GM12878 (cell line): ENCODE measurements at regions of chr15 and their contacts with region 1.

Region 1: DNA sequence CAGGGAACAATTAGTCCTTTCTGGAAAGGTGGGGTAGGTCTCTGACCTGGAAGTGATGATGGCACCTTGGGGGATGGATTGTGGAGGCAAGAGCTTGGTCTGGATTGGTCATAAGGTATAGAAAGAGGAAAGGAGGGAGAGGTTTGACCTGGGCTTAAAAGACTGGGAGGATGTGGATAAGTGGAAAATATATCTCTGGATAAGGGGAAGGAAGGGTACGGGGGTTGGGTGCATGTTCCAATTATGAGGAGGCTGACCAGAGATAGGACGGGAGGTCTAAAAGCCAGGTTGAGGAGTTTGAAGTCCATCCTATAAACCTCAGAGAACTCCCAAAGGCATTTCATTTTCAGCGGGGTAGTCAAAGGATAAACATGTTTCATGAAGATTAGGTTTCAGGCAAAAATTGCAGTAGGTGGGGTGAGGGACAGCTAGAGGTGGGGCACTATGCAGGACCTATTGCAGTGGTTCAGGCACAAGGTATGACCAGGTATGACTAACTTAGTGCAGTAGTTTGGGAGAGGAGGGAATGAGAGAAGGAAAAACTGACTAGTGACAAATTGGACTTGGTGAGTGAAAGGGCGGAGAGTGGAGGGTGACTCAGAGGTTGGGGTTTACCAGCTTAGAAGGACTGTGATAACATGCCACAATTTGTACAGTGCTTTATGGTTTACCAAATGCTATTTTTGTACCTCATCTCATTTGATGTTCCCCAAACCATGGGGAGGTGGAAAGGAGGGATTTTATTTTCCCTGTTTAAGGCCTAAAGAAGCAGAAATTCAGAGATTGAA is 10.7 kb downstream of the PDE8A start:
- DNase-seq: no peak
- ATAC-seq: peak; percentile 51
- H3K4me3 ChIP-seq: no peak overlapping the region
- H3K27ac ChIP-seq: peak overlapping the region; percentile 24
- H3K4me1 ChIP-seq: peaks cover 38% of the 10 kb centered on the region
- H3K27me3 ChIP-seq: no peaks in the 10 kb centered on the region
- CTCF ChIP-seq: no peak
- EP300 ChIP-seq: no peak
- POLR2A ChIP-seq: no peak
- RAD21 ChIP-seq: no peak

Region 2: GRCh38 chr15:84981054-84981710 is 11.2 kb before region 1 on chr15:
- CTCF ChIA-PET with region 1: interaction called, 3 read pairs
- POLR2A ChIA-PET with region 1: interaction called, 8 read pairs
- RAD21 ChIA-PET with region 1: interaction called, 6 read pairs
- SMC1A ChIA-PET with region 1: interaction called, 13 read pairs
- in situ Hi-C with region 1: no loop called
- intact Hi-C with region 1: no loop called
- DNase-seq: peak; percentile 87
- ATAC-seq: peak; percentile 79
- H3K4me3 ChIP-seq: peak overlapping the region; percentile 94
- H3K27ac ChIP-seq: peak overlapping the region; percentile 92
- H3K4me1 ChIP-seq: peaks cover 9% of the 10 kb centered on the region
- H3K27me3 ChIP-seq: no peaks in the 10 kb centered on the region
- CTCF ChIP-seq: no peak
- EP300 ChIP-seq: peak; percentile 58 to 65; a peak in 1 of 4 replicates
- POLR2A ChIP-seq: peak; percentile 77
- RAD21 ChIP-seq: no peak

Region 3: GRCh38 chr15:85005319-85005718 is 13.0 kb after region 1 on chr15:
- CTCF ChIA-PET with region 1: interaction called, 21 read pairs
- POLR2A ChIA-PET with region 1: interaction called, 39 read pairs
- RAD21 ChIA-PET with region 1: interaction called, 18 read pairs
- SMC1A ChIA-PET with region 1: interaction called, 49 read pairs
- in situ Hi-C with region 1: no loop called
- intact Hi-C with region 1: no loop called
- DNase-seq: no peak
- ATAC-seq: no peak
- H3K4me3 ChIP-seq: no peak overlapping the region
- H3K27ac ChIP-seq: no peak overlapping the region
- H3K4me1 ChIP-seq: peaks cover 47% of the 10 kb centered on the region
- H3K27me3 ChIP-seq: no peaks in the 10 kb centered on the region
- CTCF ChIP-seq: no peak
- EP300 ChIP-seq: no peak
- POLR2A ChIP-seq: no peak
- RAD21 ChIP-seq: no peak

Region 4: GRCh38 chr15:85010386-85011159 is 18.2 kb after region 1 on chr15:
- CTCF ChIA-PET with region 1: interaction called, 21 read pairs
- POLR2A ChIA-PET with region 1: interaction called, 39 read pairs
- RAD21 ChIA-PET with region 1: interaction called, 18 read pairs
- SMC1A ChIA-PET with region 1: interaction called, 49 read pairs
- in situ Hi-C with region 1: no loop called
- intact Hi-C with region 1: no loop called
- DNase-seq: no peak
- ATAC-seq: peak; percentile 70
- H3K4me3 ChIP-seq: no peak overlapping the region
- H3K27ac ChIP-seq: peak overlapping the region; percentile 56
- H3K4me1 ChIP-seq: peaks cover 50% of the 10 kb centered on the region
- H3K27me3 ChIP-seq: no peaks in the 10 kb centered on the region
- CTCF ChIP-seq: no peak
- EP300 ChIP-seq: no peak
- POLR2A ChIP-seq: no peak
- RAD21 ChIP-seq: no peak

Region 5: GRCh38 chr15:85024509-85025214 is 32.3 kb after region 1 on chr15:
- CTCF ChIA-PET with region 1: interaction called, 5 read pairs
- POLR2A ChIA-PET with region 1: interaction called, 12 read pairs
- RAD21 ChIA-PET with region 1: interaction called, 21 read pairs
- SMC1A ChIA-PET with region 1: interaction called, 45 read pairs
- in situ Hi-C with region 1: no loop called
- intact Hi-C with region 1: no loop called
- DNase-seq: no peak
- ATAC-seq: peak; percentile 79
- H3K4me3 ChIP-seq: no peak overlapping the region
- H3K27ac ChIP-seq: peak overlapping the region; percentile 76
- H3K4me1 ChIP-seq: peaks cover 36% of the 10 kb centered on the region
- H3K27me3 ChIP-seq: no peaks in the 10 kb centered on the region
- CTCF ChIP-seq: no peak
- EP300 ChIP-seq: no peak
- POLR2A ChIP-seq: no peak
- RAD21 ChIP-seq: no peak

Region 6: DNA sequence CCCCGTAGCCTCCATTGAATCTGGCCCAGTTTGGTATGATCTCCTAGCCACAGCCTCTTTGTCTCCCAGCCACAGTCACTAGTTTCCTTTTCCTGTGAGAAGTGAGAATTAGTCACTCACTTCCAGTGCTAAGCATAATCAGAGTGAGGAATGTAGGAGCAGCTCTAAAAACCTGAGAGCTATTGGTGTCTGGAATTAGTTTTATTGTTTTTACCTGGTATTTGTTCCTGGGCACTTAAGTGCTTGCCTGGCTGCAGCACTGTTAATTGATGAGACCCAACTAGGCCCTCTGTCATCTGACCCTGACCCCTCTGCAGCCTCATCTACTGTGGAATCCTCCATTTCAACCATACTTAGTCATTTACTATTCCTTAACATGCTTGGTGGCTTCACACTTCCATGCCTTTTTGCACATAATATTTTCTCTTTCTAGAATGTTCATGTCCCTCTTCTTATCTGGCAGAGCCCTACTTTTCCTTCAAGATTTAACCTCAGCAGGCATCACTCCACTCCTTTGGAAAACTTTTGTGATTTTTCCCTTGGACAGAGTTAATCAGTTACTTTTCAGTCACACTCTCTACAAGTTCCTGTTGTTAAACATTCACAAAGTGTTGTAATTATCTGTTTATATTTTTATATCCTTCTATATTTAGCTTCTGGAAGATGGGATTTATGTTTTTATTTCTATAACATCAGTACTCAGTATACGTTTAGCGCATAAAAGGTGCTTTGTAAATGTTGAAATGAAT is 38.1 kb after region 1 on chr15:
- CTCF ChIA-PET with region 1: interaction called, 5 read pairs
- POLR2A ChIA-PET with region 1: interaction called, 12 read pairs
- RAD21 ChIA-PET with region 1: interaction called, 21 read pairs
- SMC1A ChIA-PET with region 1: interaction called, 45 read pairs
- in situ Hi-C with region 1: no loop called
- intact Hi-C with region 1: no loop called
- DNase-seq: no peak
- ATAC-seq: peak; percentile 60
- H3K4me3 ChIP-seq: no peak overlapping the region
- H3K27ac ChIP-seq: peak overlapping the region; percentile 29
- H3K4me1 ChIP-seq: peaks cover 25% of the 10 kb centered on the region
- H3K27me3 ChIP-seq: no peaks in the 10 kb centered on the region
- CTCF ChIP-seq: no peak
- EP300 ChIP-seq: no peak
- POLR2A ChIP-seq: no peak
- RAD21 ChIP-seq: no peak

Region 7: GRCh38 chr15:85036716-85037115 is 44.4 kb after region 1 on chr15:
- CTCF ChIA-PET with region 1: interaction called, 4 read pairs
- POLR2A ChIA-PET with region 1: interaction called, 5 read pairs
- RAD21 ChIA-PET with region 1: interaction called, 6 read pairs
- SMC1A ChIA-PET with region 1: interaction called, 45 read pairs
- in situ Hi-C with region 1: no loop called
- intact Hi-C with region 1: no loop called
- DNase-seq: no peak
- ATAC-seq: peak; percentile 76
- H3K4me3 ChIP-seq: no peak overlapping the region
- H3K27ac ChIP-seq: no peak overlapping the region
- H3K4me1 ChIP-seq: peaks cover 10% of the 10 kb centered on the region
- H3K27me3 ChIP-seq: no peaks in the 10 kb centered on the region
- CTCF ChIP-seq: no peak
- EP300 ChIP-seq: no peak
- POLR2A ChIP-seq: no peak
- RAD21 ChIP-seq: no peak